HepG2 (cell line): ENCODE measurements at regions of chr22 and their contacts with region 1.

Region 1: DNA sequence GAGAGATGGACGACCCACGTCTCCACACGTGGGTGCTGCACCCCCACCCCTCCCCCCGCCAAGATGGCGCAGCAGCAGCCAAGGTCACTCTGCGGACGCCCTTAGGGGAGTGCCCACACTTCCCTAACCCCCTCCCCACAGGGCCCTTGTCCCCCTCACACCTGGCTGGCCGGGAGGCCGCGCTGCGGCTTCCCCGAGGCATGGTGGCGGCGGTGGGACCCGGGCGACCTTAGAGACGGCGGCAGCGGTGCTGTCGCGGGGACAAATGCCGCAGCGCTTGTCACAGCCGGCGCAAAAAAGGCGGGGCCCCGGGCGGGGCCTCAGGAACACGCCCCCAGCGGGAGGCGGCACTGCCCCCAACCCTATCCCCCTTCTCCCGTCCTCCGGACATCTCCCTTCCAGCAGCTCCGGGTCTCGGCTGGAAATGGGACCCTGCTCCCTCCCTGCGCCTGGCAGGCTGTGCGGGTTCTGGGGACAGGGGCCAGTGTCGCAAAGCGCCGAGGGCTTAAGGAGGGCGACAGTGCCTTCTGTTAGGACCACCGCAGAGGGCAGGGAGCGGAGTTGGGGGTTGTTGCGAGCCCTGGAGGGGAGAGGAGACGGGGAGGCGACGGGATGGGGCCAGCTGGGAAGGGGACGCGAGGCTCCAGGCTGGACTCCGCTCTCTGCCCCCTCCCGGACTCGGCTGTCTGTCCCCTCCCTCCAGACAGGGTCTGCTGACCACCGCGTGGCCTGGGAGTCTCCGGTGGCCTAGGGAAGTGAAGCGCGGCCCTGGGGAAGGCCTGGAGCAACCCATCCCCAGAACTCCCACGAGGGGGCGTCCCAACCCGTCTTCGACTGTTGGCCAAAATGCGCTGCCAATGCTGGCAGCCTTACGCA is at the start of gene CHCHD10:
- DNase-seq: peak; percentile 75
- ATAC-seq: peak; percentile 81
- H3K4me3 ChIP-seq: peak within 1 kb of the TSS; percentile 64 to 98 (median 81)
- H3K27ac ChIP-seq: peak within 1 kb of the TSS; percentile 88
- H3K4me1 ChIP-seq: peaks cover 72% of the 10 kb centered on the region
- H3K27me3 ChIP-seq: no peaks in the 10 kb centered on the region
- CTCF ChIP-seq: peak; percentile 97
- EP300 ChIP-seq: no peak
- POLR2A ChIP-seq: peak; percentile 67 to 69
- RAD21 ChIP-seq: peak; percentile 91
- total RNA-seq, gene CHCHD10: 59.1 and 62.8 TPM in 2 replicates

Region 2: GRCh38 chr22:23750714-23751440 is 17.0 kb before region 1 on chr22 and contains the start of gene ZNF70:
- CTCF ChIA-PET with region 1: no interaction called
- POLR2A ChIA-PET with region 1: interaction called, 52 read pairs
- in situ Hi-C with region 1: no loop called
- intact Hi-C with region 1: no loop called
- DNase-seq: peak; percentile 69
- ATAC-seq: peak; percentile 96
- H3K4me3 ChIP-seq: peak within 1 kb of the TSS; percentile 88 to 92 (median 89)
- H3K27ac ChIP-seq: peak within 1 kb of the TSS; percentile 60
- H3K4me1 ChIP-seq: peaks cover 23% of the 10 kb centered on the region
- H3K27me3 ChIP-seq: no peaks in the 10 kb centered on the region
- CTCF ChIP-seq: peak; percentile 57
- EP300 ChIP-seq: no peak
- POLR2A ChIP-seq: peak in 1 of 2 experiments; percentile 46; a peak in 1 of 4 replicates
- RAD21 ChIP-seq: peak; percentile 29; the same call in 1 of the 2 replicates
- total RNA-seq, gene ZNF70: 3.6 and 4.0 TPM in 2 replicates

Region 3: DNA sequence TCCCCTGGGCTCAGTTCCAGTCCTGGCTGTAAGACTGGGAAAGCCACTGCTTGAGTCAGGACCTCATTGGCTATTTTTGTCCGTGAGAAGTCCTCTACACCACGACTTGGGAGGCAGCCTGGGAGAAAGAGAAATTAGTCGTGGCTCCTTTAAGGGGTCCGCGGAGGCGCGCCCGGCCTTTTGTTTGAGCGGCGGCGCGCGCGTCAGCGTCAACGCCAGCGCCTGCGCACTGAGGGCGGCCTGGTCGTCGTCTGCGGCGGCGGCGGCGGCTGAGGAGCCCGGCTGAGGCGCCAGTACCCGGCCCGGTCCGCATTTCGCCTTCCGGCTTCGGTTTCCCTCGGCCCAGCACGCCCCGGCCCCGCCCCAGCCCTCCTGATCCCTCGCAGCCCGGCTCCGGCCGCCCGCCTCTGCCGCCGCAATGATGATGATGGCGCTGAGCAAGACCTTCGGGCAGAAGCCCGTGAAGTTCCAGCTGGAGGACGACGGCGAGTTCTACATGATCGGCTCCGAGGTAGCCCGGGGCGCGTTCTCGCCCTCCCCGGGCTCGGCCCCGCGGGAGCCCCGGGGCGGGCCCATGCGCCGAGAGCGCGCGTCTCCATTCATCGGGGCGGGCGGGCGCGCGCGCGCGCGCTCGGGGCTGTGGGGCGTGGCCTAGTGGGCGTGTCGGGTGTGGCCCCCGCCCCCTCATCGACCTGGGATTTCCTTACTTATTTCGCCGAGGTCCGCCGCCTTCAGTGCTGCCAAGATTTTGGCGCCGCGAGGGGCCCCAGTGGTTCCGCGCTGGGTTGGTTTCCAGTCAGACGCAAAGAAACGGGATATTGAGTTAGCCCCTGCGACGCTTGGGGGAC is 19.1 kb after region 1 on chr22 and contains the start of gene SMARCB1:
- CTCF ChIA-PET with region 1: interaction called, 18 read pairs
- POLR2A ChIA-PET with region 1: interaction called, 201 read pairs
- in situ Hi-C with region 1: no loop called
- intact Hi-C with region 1: loop called (anchors 1 kb)
- DNase-seq: peak; percentile 70
- ATAC-seq: peak; percentile 43
- H3K4me3 ChIP-seq: peak within 1 kb of the TSS; percentile 84 to 92 (median 90)
- H3K27ac ChIP-seq: peak within 1 kb of the TSS; percentile 99
- H3K4me1 ChIP-seq: peaks cover 71% of the 10 kb centered on the region
- H3K27me3 ChIP-seq: no peaks in the 10 kb centered on the region
- CTCF ChIP-seq: no peak; the same call in 1 of the 2 replicates
- EP300 ChIP-seq: no peak
- POLR2A ChIP-seq: peak; percentile 66 to 82
- RAD21 ChIP-seq: peak; percentile 55; the same call in 1 of the 2 replicates
- total RNA-seq, gene SMARCB1: 74.0 and 75.8 TPM in 2 replicates

Region 4: GRCh38 chr22:23849009-23850006 is 81.4 kb after region 1 on chr22:
- CTCF ChIA-PET with region 1: interaction called, 34 read pairs
- POLR2A ChIA-PET with region 1: interaction called, 18 read pairs
- in situ Hi-C with region 1: no loop called
- intact Hi-C with region 1: loop called (anchors 5 kb)
- DNase-seq: peak; percentile 58
- ATAC-seq: peak; percentile 82
- H3K4me3 ChIP-seq: peak overlapping the region; percentile 27 to 69 (median 49); a peak in 3 of 6 replicates
- H3K27ac ChIP-seq: no peak overlapping the region
- H3K4me1 ChIP-seq: peaks cover 65% of the 10 kb centered on the region
- H3K27me3 ChIP-seq: peaks cover 2 to 11% of the 10 kb centered on the region in 2 experiments; a peak in 1 of 5 replicates
- CTCF ChIP-seq: peak; percentile 99
- EP300 ChIP-seq: no peak
- POLR2A ChIP-seq: no peak
- RAD21 ChIP-seq: peak; percentile 99

Region 5: DNA sequence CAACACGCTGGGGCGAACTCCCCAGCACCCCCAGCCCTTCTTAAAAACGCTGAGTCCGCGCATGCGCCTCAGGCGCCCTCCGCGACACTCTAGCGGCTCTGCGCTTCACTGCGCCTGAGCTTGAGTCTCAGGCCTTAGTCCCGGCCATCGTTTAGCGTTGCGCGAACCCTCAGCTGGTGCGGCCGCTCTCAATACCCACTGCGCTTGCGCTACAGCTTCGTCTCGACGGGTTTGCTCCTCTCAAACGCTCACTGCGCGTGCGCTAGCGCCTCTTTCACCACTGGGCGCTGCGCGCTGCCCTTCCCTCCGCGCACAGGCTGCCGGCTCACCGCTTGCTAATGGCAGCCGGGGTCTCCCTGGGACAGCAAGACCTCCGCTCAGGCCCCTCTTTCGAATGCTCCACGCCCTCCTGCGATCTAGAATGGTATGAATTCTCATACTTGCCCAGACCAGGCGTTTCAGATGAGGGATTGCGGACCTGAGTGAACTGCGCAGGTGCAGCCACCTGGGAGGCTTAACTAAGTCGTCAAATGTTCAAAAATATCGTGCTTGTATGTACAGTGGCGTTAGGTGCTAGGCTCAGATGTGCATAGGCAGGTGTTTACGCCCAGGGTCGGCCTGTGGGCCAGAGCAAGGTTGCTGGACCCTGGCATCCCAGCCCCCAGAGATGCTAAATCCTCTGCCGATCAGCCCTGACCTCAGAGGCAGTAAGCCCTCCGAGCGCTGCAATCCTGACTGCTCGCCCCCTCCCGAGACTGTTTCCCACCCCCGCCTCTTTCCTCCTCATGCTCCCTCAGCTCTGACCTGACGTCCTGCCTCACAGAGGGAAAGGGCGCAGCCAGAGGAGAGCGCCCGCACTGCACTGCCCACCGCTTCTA is 89.9 kb after region 1 on chr22 and contains the start of gene SLC2A11:
- CTCF ChIA-PET with region 1: interaction called, 6 read pairs
- POLR2A ChIA-PET with region 1: interaction called, 56 read pairs
- in situ Hi-C with region 1: no loop called
- intact Hi-C with region 1: no loop called
- DNase-seq: peak; percentile 96
- ATAC-seq: peak; percentile 93
- H3K4me3 ChIP-seq: peak within 1 kb of the TSS; percentile 65 to 89 (median 75)
- H3K27ac ChIP-seq: peak within 1 kb of the TSS; percentile 81
- H3K4me1 ChIP-seq: peaks cover 25% of the 10 kb centered on the region
- H3K27me3 ChIP-seq: no peaks in the 10 kb centered on the region; a peak in 1 of 5 replicates
- CTCF ChIP-seq: peak; percentile 19
- EP300 ChIP-seq: no peak
- POLR2A ChIP-seq: peak; percentile 47 to 93; a peak in 3 of 4 replicates
- RAD21 ChIP-seq: no peak
- total RNA-seq, gene SLC2A11: 8.9 and 15.2 TPM in 2 replicates

Region 6: DNA sequence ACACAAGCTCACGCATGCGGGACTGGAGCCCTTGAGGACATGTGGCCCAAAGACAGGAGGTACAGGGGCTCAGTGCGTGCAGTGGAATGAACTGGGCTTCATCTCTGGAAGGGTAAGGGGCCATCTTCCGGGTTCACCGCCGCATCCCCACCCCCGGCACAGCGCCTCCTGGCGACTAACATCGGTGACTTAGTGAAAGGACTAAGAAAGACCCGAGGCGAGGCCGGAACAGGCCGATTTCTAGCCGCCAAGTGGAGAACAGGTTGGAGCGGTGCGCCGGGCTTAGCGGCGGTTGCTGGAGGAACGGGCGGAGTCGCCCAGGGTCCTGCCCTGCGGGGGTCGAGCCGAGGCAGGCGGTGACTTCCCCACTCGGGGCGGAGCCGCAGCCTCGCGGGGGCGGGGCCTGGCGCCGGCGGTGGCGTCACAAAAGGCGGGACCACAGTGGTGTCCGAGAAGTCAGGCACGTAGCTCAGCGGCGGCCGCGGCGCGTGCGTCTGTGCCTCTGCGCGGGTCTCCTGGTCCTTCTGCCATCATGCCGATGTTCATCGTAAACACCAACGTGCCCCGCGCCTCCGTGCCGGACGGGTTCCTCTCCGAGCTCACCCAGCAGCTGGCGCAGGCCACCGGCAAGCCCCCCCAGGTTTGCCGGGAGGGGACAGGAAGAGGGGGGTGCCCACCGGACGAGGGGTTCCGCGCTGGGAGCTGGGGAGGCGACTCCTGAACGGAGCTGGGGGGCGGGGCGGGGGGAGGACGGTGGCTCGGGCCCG is 126.2 kb after region 1 on chr22 and contains the start of gene MIF:
- CTCF ChIA-PET with region 1: no interaction called
- POLR2A ChIA-PET with region 1: interaction called, 13 read pairs
- in situ Hi-C with region 1: no loop called
- intact Hi-C with region 1: no loop called
- DNase-seq: peak; percentile 89
- ATAC-seq: peak; percentile 82
- H3K4me3 ChIP-seq: peak within 1 kb of the TSS; percentile 78 to 86 (median 85)
- H3K27ac ChIP-seq: peak within 1 kb of the TSS; percentile 96
- H3K4me1 ChIP-seq: peaks cover 54% of the 10 kb centered on the region
- H3K27me3 ChIP-seq: no peaks in the 10 kb centered on the region; a peak in 1 of 5 replicates
- CTCF ChIP-seq: peak; percentile 92
- EP300 ChIP-seq: peak in 1 of 2 experiments; percentile 35; a peak in 1 of 4 replicates
- POLR2A ChIP-seq: peak; percentile 89 to 98
- RAD21 ChIP-seq: peak; percentile 48
- total RNA-seq, gene MIF: 537 and 634 TPM in 2 replicates